Mammary epithelial cell (primary cell): ENCODE measurements at regions of chr18 and their contacts with region 1.

Region 1: DNA sequence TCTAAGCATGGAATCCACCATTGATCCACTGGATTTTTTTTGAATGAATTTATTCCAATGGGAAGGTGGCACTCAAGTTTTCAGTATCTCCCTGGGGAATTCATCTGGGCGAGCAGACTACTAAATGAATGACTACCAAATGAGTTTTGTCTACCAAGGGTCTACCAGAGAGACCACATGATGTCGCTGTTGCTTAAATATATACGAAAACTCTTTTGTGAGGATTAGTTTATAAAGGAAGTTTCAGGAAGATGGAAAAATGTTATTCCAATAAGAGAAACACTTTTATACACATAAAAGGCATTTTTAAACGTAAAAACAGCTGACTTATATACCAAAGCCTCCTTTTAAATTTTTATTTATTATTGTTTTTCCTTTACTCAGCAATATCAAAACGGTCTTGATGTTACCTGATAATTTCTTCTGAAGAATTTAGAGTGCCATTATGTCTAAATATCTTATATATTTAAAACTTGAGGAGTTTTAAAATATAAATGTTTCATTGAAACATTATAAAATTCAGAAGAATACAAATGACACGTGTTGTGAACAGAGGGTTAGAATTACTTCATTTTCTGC is 139.7 kb downstream of the HRH4 start:
- DNase-seq: peak; percentile 45
- H3K4me3 ChIP-seq: no peak overlapping the region
- H3K27ac ChIP-seq: no peak overlapping the region
- H3K4me1 ChIP-seq: peaks cover 8% of the 10 kb centered on the region
- H3K27me3 ChIP-seq: no peaks in the 10 kb centered on the region
- CTCF ChIP-seq: peak; percentile 55 to 61

Region 2: GRCh38 chr18:24659827-24660720 is 59.9 kb after region 1 on chr18:
- CTCF ChIA-PET with region 1: no interaction called
- dilution Hi-C with region 1: no loop called
- in situ Hi-C with region 1: no loop called
- intact Hi-C with region 1: loop called (anchors 10 kb)
- DNase-seq: peak; percentile 36
- H3K4me3 ChIP-seq: no peak overlapping the region
- H3K27ac ChIP-seq: no peak overlapping the region
- H3K4me1 ChIP-seq: no peaks in the 10 kb centered on the region
- H3K27me3 ChIP-seq: no peaks in the 10 kb centered on the region
- CTCF ChIP-seq: no peak

Region 3: GRCh38 chr18:24726727-24727492 is 126.7 kb after region 1 on chr18:
- CTCF ChIA-PET with region 1: interaction called, 3 read pairs
- dilution Hi-C with region 1: no loop called
- in situ Hi-C with region 1: loop called (anchors 5 kb)
- intact Hi-C with region 1: loop called (anchors 1 kb)
- DNase-seq: peak; percentile 61
- H3K4me3 ChIP-seq: no peak overlapping the region
- H3K27ac ChIP-seq: no peak overlapping the region
- H3K4me1 ChIP-seq: peaks cover 17% of the 10 kb centered on the region
- H3K27me3 ChIP-seq: peaks cover 2% of the 10 kb centered on the region
- CTCF ChIP-seq: peak; percentile 74 to 85

Region 4: GRCh38 chr18:24734058-24734457 is 133.9 kb after region 1 on chr18:
- CTCF ChIA-PET with region 1: no interaction called
- dilution Hi-C with region 1: no loop called
- in situ Hi-C with region 1: loop called (anchors 5 kb)
- intact Hi-C with region 1: loop called (anchors 2 kb)
- DNase-seq: peak; percentile 62
- H3K4me3 ChIP-seq: no peak overlapping the region
- H3K27ac ChIP-seq: no peak overlapping the region
- H3K4me1 ChIP-seq: peaks cover 56% of the 10 kb centered on the region
- H3K27me3 ChIP-seq: no peaks in the 10 kb centered on the region
- CTCF ChIP-seq: peak; percentile 54 to 58